ENCODE measurements at regions of chr16 and their contacts with region 1.

Region 1: DNA sequence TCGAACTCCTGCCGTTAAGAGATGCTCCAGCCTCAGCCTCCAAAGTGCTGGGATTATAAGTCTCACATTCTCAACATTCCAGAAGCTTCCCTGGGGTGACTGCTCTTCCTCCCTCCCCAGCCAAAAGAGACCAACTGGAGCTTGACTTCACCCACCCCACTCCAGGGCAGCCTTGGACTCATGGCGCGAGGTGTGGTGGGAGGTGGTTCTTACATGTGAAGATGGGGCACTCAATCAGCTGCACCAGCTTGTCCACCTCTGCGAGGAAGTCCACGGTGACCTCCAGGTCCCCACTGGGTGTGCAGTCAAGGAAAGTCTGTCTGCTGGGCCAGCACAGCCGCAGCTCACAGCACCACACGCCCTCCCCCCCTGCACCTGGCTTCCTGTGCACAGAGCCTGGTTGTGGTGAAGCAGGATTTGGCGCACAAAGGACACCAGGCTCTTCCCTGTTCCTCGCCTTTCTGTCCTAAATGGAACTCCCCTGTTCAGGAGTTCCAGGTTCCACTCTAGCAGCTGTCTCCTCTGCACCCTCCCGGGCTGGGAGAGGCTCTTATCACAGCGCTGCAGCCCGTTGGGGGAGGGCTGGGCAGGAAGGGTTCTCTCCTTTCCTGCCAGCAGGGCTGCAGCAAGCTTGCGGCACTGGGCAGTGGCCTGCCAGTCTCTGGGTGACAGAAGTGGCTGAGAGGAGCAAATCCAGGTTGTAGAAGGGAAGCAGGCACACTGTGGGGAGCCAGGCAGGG is 9.6 kb upstream of the MTSS2 start:
- DNase-seq: no peak
- H3K4me3 ChIP-seq: no peak overlapping the region
- CTCF ChIP-seq: no peak

Region 2: GRCh38 chr16:70759666-70760065 is 64.2 kb after region 1 on chr16:
- in situ Hi-C with region 1: loop called (anchors 5 kb)
- DNase-seq: no peak
- H3K4me3 ChIP-seq: no peak overlapping the region
- CTCF ChIP-seq: no peak

Measured in astrocyte of the cerebellum (primary cell).